Astrocyte of the cerebellum (primary cell): ENCODE measurements at regions of chr20 and their contacts with region 1.

Region 1: GRCh38 chr20:9978397-9979004 is 56.3 kb upstream of the ANKEF1 start:
- DNase-seq: peak; percentile 92
- H3K4me3 ChIP-seq: no peak overlapping the region
- CTCF ChIP-seq: peak; percentile 75

Region 2: DNA sequence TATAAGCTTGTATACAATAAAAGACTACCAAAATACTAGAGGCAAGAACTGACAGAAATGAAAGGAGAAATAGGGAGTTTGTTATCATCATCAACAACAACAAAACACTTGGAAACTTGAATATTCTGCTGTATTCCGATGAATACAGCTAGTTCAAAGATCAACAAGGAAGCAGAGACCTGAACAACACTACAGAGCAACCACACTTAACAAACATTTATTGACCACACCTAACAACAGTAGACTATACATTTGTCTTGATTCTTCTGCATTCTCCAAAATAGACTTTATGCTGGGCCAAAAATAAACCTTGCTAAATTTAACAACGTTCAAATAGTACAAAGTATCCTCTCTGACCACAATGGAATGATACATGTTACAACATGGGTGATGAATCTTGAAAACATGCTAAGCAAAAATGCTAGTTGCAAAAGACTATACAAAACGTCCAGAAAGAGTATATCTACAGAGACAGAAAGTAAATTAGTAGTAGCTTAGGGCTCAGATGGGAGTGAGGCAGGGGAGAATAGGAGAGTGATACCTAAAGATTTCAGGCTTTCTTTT is 100.5 kb before region 1 on chr20:
- in situ Hi-C with region 1: no loop called
- DNase-seq: no peak
- H3K4me3 ChIP-seq: no peak overlapping the region
- CTCF ChIP-seq: no peak

Region 3: DNA sequence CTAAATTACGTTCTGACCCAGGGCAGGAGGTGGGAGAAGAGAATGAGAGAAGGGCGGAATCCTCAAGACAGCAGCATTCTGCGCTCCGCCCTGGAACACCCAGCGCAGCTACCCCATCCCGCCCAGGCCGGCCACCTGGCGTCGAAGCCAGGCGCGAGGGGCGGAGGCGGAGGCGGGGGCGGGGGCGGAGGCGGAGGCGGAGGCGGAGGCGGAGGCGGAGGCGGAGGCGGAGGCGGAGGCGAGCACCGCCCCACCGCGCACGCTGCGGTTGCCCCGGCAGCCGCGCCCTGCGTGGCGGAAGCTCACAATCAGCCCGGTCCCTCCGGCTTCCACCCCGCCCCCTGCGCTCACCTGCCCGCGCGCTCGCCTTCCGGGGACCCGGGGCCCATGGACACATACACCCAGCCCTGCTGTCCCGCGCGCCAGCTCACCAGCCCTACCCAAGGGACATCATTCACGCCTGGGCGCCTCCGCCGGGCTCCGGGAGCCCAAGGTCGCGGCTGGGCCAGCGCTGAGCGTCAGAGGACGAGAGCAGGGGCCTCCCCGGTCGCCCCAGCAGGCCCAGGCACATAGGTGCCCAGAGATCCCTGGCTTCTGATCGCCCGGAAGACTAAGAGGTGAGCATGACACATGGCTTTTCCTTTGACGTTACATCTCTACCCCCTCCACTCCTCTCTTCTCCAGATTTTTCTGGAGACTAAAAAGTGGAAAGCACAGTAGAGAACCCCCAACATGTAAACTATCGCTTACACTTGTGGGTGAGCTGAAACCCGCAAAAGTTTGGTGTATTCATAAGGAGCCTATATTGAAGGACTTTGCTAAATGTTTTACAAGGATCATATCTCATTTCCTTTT is 56.4 kb after region 1 on chr20 and contains the start of gene ANKEF1:
- in situ Hi-C with region 1: no loop called
- DNase-seq: no peak
- H3K4me3 ChIP-seq: peak within 1 kb of the TSS; percentile 70
- CTCF ChIP-seq: peak; percentile 6

Region 4: DNA sequence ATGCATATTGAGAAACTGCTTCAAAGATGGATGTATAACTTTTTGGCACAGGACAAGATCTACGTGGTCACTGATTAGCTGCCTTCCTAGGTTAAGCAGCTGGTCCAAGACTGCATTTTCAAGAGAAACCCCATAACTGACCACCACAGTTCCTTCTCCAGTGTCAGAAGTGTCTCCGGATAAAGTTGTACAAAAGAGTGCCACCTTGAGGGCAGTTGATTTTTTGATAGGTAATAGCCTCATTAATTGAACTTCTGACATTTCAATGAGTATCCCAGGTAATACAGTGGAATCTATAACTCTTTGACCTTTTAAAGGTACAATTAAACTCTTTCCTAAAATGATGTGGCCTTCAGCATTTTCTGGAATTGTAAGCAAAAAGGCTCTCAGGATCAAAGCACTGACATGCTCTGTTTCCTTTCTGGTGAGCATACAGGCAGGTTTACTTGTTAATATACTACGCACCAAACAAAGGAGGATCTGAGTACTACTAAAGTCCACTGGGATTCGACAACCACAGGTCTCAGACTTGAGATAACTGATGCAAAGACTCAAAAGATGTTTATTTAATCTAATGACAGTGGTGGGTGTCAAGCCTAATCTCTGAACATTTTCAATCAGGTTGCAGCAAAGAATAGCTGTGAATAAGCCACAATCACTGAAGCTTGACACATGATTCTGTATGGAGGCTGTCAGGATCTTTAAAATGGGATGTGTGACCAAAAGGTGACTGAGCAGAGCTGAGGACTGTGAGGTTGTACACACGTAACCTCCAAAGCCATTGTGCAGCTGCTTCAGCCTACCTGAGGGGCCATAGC is 434.3 kb after region 1 on chr20:
- in situ Hi-C with region 1: loop called (anchors 25 kb)
- DNase-seq: no peak
- H3K4me3 ChIP-seq: no peak overlapping the region
- CTCF ChIP-seq: peak; percentile 31